ENCODE measurements at regions of chr14 and their contacts with region 1.

Region 1: DNA sequence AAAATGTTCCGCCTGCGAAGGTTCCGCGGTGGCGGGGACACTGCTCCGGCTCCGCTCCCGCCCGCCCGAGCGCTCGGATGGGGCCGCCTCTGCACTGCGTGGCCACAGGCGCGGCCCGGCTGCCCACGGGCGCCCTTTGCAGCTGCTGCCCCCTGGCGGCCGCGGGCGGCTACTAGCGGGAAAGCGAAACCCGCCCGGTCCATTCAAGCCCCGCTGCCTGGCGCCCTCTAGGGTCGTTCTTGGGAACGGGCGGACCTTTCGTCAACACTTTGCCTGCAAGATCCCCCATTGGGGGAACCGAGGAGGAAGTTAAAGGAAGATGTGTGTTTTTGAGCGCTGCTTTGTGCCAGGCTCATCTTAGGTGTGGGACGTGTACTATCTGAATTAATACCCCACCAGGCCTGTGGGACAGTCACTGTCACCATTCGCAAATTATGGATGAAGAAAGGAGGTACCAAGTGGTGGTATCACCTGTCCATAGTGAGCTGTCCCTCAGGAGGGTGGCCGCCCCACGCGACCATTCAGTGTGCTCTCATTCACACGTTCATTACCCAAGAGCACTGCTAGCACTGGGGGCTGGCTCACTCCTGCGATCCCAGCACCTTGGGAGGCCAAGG is 19.4 kb downstream of the GPR132 start:
- DNase-seq: peak; percentile 91 to 95
- ATAC-seq: peak; percentile 95 to 98 (median 97)
- H3K4me3 ChIP-seq: no peak overlapping the region
- H3K4me3 Mint-ChIP-seq: peak overlapping the region; percentile 50
- H3K27ac ChIP-seq: no peak overlapping the region
- H3K27ac Mint-ChIP-seq: peak overlapping the region; percentile 37 to 68
- H3K4me1 ChIP-seq: peaks cover 11% of the 10 kb centered on the region
- H3K4me1 Mint-ChIP-seq: peaks cover 13 to 14% of the 10 kb centered on the region in 2 donors
- H3K27me3 ChIP-seq: no peaks in the 10 kb centered on the region
- H3K27me3 Mint-ChIP-seq: no peaks in the 10 kb centered on the region
- CTCF ChIP-seq: peak; percentile 100

Region 2: DNA sequence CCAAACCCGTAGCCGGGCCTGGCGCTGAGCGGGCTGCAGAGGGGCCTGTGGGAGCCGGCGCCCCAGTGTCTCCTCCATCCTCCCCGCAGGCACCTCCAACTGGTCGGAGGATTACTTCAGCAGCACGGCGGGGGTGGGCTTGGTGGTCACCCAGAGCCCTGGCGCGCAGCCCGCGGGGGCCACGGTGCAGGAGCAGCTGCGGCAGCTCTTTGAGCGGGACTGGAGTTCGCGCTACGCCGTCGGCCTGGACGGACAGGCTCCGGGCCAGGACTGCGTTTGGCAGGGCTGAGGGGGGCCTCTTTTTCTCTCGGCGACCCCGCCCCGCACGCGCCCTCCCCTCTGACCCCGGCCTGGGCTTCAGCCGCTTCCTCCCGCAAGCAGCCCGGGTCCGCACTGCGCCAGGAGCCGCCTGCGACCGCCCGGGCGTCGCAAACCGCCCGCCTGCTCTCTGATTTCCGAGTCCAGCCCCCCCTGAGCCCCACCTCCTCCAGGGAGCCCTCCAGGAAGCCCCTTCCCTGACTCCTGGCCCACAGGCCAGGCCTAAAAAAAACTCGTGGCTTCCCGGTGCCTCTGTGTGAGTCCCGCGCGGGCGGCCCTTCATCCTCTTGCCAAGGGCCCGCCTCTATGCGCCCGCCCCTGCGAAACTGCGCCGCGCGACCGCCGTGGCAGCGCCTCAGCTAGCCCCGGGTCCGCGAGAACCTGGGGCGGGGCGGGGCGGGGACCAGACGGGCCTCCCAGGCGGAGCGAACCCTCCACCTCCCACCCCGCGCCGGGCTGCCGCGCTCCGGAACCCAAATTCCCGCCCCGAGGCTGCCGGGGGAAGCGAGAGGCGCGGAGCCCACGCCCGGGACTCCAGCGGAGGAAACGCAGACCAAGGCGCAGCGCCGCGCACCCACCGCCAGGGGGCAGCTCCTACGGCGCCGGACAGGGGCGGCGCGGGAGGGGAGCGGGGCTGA is 112.9 kb before region 1 on chr14:
- intact Hi-C with region 1: loop called (anchors 2 kb)
- DNase-seq: peak; percentile 81 to 90
- ATAC-seq: peak; percentile 85 to 98 (median 94)
- H3K4me3 ChIP-seq: peak overlapping the region; percentile 23
- H3K4me3 Mint-ChIP-seq: peak overlapping the region; percentile 85
- H3K27ac ChIP-seq: no peak overlapping the region
- H3K27ac Mint-ChIP-seq: peak overlapping the region in 1 of 2 donors; percentile 59
- H3K4me1 ChIP-seq: peaks cover 12% of the 10 kb centered on the region
- H3K4me1 Mint-ChIP-seq: peaks cover 0 to 5% of the 10 kb centered on the region in 2 donors
- H3K27me3 ChIP-seq: peaks cover 5% of the 10 kb centered on the region
- H3K27me3 Mint-ChIP-seq: peaks cover 9 to 12% of the 10 kb centered on the region in 2 donors
- CTCF ChIP-seq: peak; percentile 65

Region 3: DNA sequence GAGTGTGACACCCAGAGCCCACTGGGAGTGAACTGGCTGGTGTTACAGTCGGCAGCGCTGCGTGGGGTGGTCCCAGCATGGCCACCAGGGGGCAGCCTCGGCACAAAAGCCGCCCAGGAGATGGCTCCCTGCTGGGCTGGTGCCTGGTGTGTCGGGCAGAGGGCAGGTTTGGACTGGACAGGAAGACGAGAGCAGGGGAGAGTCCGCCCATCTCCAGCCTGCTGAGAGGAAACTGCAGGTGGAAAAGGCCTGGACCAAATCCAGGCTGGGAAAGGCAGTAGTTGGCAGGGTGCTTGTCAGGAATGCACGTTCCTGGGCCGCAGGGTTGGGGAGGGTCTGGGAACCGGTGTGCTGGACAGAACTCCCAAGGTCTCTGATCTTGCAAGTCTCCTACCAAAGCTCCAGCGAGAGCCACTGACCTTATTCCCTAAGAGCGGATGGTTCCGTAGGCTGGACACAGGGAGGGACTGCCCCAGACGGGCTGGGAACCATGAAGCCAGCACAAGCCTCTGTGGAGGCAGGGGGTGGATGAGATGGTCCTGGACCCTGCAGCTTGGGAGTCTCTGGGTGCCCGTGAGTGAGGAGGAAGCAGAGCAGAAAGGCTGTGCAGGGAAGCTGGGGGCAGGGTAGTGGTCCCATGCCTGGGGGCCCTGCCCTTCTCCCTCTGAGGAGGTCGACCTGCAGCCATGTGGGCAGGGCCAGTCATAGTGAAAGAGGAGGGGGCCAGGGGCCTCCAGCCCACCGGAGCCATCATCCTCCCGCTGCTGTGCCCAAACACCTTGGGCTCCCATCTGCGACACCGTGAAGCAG is 69.4 kb before region 1 on chr14:
- intact Hi-C with region 1: loop called (anchors 1 kb)
- DNase-seq: peak; percentile 88 to 92
- ATAC-seq: peak; percentile 84 to 91 (median 84)
- H3K4me3 ChIP-seq: no peak overlapping the region
- H3K4me3 Mint-ChIP-seq: peak overlapping the region; percentile 85
- H3K27ac ChIP-seq: no peak overlapping the region
- H3K27ac Mint-ChIP-seq: peak overlapping the region in 1 of 2 donors; percentile 35
- H3K4me1 ChIP-seq: peaks cover 15% of the 10 kb centered on the region
- H3K4me1 Mint-ChIP-seq: peaks cover 11 to 24% of the 10 kb centered on the region in 2 donors
- H3K27me3 ChIP-seq: peaks cover 15% of the 10 kb centered on the region
- H3K27me3 Mint-ChIP-seq: peaks cover 8 to 22% of the 10 kb centered on the region in 2 donors
- CTCF ChIP-seq: peak; percentile 95